ENCODE measurements at regions of chr6 and their contacts with region 1.

Region 1: DNA sequence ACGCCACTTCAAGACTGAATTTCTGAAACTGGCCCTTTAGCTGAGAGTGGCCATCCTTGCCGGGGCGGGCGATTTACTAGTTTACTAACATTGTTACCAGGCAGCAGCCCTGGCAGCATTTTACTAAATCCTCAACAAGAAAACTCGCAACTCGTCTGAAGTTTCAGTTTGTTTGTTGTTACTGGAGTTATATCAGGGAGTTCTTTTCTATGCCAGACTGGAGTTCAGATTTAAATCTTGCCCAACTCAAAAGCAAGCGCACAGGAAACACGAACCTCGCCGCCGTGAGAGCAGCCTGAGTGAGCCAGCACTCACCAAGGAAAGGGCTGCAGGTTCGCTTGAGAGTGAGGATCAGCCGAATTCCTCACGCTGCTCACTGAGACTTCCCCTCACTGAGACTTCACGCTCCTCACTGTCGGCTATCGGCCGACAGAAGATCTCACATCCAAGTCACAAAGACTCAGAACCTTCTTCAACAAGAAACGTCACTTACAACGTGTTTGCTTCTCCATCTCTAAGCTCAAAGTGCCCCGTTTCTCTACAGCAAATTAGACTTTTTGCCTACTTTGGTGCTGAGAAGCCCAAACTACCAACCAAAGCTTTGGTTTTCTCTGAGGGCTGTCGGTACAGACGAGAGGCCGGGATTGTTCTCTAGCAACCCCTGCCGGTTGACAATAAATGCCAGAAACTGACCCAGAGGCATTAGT is 78.9 kb downstream of the OLIG3 start:
- DNase-seq: peak; percentile 57
- H3K4me3 Mint-ChIP-seq: peak overlapping the region; percentile 81
- H3K27ac Mint-ChIP-seq: peak overlapping the region; percentile 53
- H3K4me1 Mint-ChIP-seq: peaks cover 14% of the 10 kb centered on the region
- H3K27me3 Mint-ChIP-seq: peaks cover 23% of the 10 kb centered on the region

Region 2: GRCh38 chr6:137076277-137077068 is 338.8 kb before region 1 on chr6:
- intact Hi-C with region 1: loop called (anchors 1 kb)
- DNase-seq: peak; percentile 52
- H3K4me3 Mint-ChIP-seq: no peak overlapping the region
- H3K27ac Mint-ChIP-seq: no peak overlapping the region
- H3K4me1 Mint-ChIP-seq: no peaks in the 10 kb centered on the region
- H3K27me3 Mint-ChIP-seq: peaks cover 30% of the 10 kb centered on the region

Region 3: DNA sequence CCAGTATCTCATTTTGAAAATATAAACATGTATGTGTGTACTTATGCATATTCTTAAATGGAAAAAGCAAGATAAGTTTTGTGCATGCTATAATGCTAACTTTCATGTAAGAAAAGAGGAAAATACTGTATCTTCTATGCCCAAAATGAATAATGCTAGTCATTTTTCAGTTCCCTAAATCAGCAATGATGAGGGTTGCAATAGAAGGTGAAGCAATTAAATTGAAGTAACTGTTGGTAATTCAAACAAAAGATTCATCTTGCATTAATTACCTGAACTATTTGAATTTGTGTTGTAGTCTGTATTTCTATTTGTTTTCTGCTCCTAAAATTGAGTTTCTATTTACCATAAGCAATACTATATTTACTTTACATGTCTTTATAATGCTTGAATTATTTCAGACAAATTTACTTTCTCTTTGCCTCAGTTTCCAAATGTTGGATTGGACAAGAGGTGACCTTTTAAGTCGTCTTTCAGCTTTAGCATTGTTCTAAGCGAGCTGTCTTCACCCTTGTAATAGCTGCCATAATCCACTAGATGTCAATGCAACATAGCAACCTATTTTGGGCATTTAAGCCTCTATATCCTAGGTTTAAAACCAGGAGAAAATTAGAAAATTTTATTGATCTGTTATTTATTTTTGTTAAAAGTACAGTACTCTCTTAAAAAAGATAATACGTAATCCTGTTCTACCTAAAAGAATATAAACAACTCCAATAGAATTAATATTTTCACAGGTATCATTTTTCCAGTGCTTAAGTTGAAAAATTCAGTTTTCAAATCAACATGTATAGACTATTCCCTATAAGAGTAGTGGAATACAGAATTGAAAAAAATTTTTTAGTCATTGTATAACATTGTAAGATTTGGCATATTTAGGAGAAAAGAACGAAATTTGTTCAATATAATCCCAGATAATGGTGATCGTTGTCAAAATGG is 143.8 kb before region 1 on chr6:
- intact Hi-C with region 1: loop called (anchors 1 kb)
- DNase-seq: no peak
- H3K4me3 Mint-ChIP-seq: no peak overlapping the region
- H3K27ac Mint-ChIP-seq: no peak overlapping the region
- H3K4me1 Mint-ChIP-seq: peaks cover 13% of the 10 kb centered on the region
- H3K27me3 Mint-ChIP-seq: peaks cover 31% of the 10 kb centered on the region

Region 4: GRCh38 chr6:137313928-137314855 is 101.1 kb before region 1 on chr6:
- intact Hi-C with region 1: loop called (anchors 1 kb)
- DNase-seq: peak; percentile 32
- H3K4me3 Mint-ChIP-seq: no peak overlapping the region
- H3K27ac Mint-ChIP-seq: no peak overlapping the region
- H3K4me1 Mint-ChIP-seq: peaks cover 9% of the 10 kb centered on the region
- H3K27me3 Mint-ChIP-seq: peaks cover 15% of the 10 kb centered on the region

Region 5: DNA sequence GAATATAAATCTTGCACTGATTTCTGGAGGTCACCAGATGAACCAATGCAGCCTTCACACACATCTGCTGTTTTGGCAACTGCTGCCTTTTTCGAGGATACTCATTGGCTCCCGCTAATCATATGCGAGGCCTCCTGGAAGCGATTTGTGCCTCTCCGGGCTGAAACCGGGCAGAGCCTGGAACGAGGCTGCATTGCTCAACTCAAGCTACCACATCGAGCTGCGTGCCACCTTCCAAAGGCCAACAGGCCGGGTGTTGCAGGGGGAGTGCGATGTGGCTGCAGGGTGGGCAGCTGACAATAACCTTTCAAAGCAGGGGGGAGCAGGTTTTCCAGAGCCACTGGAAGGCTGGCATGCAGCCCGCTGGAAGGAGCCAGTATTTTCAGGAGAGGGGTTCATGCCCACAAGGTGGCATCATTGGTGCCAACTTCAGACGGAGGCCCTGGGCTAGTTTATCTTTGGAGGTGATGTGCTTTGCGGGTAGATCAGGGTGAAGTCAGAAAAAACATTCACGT is 73.5 kb before region 1 on chr6:
- intact Hi-C with region 1: loop called (anchors 1 kb)
- DNase-seq: peak; percentile 19
- H3K4me3 Mint-ChIP-seq: peak overlapping the region; percentile 79
- H3K27ac Mint-ChIP-seq: no peak overlapping the region
- H3K4me1 Mint-ChIP-seq: peaks cover 23% of the 10 kb centered on the region
- H3K27me3 Mint-ChIP-seq: peaks cover 28% of the 10 kb centered on the region

Region 6: GRCh38 chr6:137363805-137364138 is 51.5 kb before region 1 on chr6:
- intact Hi-C with region 1: loop called (anchors 2 kb)
- DNase-seq: peak; percentile 13
- H3K4me3 Mint-ChIP-seq: peak overlapping the region; percentile 45
- H3K27ac Mint-ChIP-seq: peak overlapping the region; percentile 73
- H3K4me1 Mint-ChIP-seq: peaks cover 28% of the 10 kb centered on the region
- H3K27me3 Mint-ChIP-seq: peaks cover 2% of the 10 kb centered on the region

Region 7: DNA sequence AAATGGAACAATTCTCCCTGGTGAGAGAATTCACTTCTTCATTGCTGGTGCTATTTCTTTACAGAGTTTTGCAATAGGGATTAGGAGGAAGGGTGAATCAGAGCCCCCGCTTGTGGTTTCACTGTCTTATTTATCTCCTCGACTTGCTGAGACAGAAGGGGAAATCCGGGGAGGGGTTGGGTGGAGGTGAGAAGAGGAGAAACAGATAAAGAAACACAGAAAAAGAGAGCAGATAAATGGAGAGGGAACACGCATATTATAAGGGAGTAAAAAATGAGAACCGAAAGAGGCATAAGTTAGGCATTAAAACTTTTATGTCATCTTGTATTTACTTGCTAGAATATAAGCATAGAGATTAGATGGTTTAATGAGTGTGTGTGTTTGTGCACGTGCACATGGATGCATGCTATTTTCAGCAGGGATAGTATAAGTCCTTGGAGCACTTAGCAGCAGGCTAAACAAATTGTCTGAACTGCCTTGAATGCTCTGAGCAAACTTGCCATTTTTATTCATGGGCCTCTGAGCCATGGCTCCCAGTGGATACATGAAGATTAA is 26.1 kb before region 1 on chr6:
- intact Hi-C with region 1: loop called (anchors 1 kb)
- DNase-seq: peak; percentile 73
- H3K4me3 Mint-ChIP-seq: peak overlapping the region; percentile 53
- H3K27ac Mint-ChIP-seq: peak overlapping the region; percentile 85
- H3K4me1 Mint-ChIP-seq: peaks cover 46% of the 10 kb centered on the region
- H3K27me3 Mint-ChIP-seq: no peaks in the 10 kb centered on the region

Region 8: GRCh38 chr6:137432054-137432611 is 16.9 kb after region 1 on chr6:
- intact Hi-C with region 1: no loop called
- DNase-seq: no peak
- H3K4me3 Mint-ChIP-seq: no peak overlapping the region
- H3K27ac Mint-ChIP-seq: no peak overlapping the region
- H3K4me1 Mint-ChIP-seq: no peaks in the 10 kb centered on the region
- H3K27me3 Mint-ChIP-seq: peaks cover 32% of the 10 kb centered on the region

Measured in activated T-helper 1 cell treated with anti-CD3 and anti-CD28 coated beads, Interleukin-12 subunit alpha, Interleukin-12 subunit beta, Interleukin-2, Interleukin-4 antibody, amounts not matched to agents 30 ng/mL and 10 ng/mL and 1 ng/mL, durations not matched to agents 14 hours and 24 hours and 36 hours (primary cell).